ENCODE measurements at regions of chr1 and their contacts with region 1.

Region 1: DNA sequence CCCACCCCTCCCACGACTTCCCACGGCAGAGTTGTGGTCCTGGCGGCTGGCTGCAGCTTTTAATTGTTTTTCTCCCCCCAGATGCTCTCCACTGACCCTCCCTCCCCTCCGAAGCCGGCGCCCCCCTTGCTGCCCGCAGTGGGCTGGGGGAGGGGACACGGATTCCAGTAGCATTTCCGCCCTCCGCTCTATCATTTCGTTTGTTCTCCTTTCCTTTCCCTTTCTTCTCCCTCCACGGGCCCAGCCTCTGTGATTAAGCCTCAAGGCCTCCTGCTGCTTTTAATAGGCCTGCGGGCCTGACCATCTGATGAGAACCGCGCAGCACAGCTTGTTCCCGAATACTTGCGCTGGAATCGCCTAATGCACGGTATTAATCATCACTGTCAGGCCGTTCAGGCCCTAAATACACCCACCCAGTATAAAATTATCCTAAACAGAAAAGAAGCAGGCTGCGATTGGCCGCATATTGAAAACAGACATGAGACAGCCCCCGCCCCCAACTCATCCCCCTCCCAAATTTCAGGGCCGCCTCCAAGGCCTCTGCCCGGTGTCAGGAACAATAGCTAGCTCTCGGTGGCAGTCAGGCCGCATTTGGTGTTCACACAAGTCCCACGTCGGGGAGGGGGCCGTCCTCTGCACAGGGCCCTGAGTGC is 102.0 kb upstream of the ARHGEF16 start:
- DNase-seq: peak in 2 of 5 donors; percentile 53 to 84
- ATAC-seq: peak in 2 of 4 donors; percentile 2 to 18
- H3K4me3 ChIP-seq: no peak overlapping the region
- H3K27ac ChIP-seq: peak overlapping the region; percentile 60 to 98 (median 90)
- H3K4me1 ChIP-seq: peaks cover 0 to 87% (median 52%) of the 10 kb centered on the region in 12 donors
- H3K27me3 ChIP-seq: peaks cover 0 to 20% (median 0%) of the 10 kb centered on the region in 9 donors
- CTCF ChIP-seq: no peak
- POLR2A ChIP-seq: peak in 1 of 2 donors; percentile 18

Region 2: DNA sequence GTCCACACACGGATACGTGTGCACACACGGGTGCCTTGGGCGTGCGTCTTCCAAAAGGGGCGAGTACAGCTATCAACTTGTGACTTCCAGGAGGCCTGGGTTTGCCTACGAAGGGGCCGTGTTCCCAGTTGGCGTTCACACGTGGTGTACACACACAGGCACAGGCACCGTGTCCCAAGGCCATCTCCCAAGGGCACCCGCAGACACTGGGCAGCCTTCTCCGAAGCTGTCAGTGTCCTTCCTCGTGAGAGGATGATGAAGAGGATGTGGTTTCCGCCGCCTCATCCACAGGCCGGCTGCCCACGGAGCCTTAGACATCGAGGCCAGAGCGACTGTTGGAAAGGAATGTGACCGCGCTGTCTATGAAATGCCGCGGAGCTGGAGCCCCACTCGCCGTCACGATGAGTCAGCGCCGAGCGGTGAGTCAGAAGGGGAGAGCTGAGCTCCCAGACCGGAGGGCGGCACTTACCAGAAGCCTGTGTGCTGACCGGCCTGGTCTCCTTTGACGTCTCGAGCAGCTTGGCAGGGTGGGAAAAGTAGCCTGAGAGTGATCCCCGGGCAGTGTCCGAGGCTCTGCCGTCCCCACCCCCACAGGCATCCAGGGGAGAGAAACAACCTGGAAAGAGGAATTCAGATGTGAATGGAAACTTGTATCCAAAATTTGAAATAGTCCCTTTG is 39.4 kb before region 1 on chr1:
- intact Hi-C with region 1: loop called in 3 of 10 experiments (anchors 5 kb)
- DNase-seq: peak; percentile 88 to 98 (median 93)
- ATAC-seq: peak; percentile 91 to 96 (median 94)
- H3K4me3 ChIP-seq: peak overlapping the region in 5 of 12 donors; percentile 7 to 22 (median 17)
- H3K27ac ChIP-seq: peak overlapping the region; percentile 77 to 99 (median 94)
- H3K4me1 ChIP-seq: peaks cover 0 to 78% (median 36%) of the 10 kb centered on the region in 12 donors
- H3K27me3 ChIP-seq: no peaks in the 10 kb centered on the region
- CTCF ChIP-seq: no peak
- POLR2A ChIP-seq: peak in 1 of 2 donors; percentile 41

Region 3: DNA sequence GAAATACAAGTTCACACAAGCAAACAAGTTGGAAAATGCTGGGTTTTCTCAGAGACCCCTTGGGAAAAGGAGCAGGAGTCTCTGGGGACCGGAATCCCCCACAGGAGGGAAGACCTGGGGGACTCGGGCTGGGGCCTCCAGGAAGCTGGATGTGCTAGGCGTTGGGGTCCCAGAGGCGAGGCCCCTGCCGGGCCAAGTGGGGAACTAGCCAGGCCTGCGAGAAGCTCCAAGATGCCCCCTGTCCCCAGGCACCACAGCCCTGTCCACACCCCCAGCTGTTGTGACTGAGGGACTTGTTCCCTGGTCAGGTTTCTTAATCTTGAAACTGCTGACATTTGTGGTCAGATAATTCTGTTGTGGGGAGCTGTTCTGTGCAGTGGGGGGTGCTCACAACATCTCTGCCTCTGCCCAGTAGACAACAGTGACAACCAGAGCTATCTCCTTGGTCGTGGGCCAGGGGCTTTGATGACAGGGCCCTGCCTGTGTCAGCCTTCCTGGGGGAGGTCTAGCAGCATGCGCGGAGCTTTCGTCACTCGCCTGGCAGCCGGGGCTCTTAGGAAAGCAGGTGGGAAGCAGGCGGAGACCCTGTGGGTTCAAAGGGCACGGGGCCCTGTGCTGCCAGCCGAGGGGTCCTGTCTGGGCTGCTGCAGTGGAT is 24.4 kb before region 1 on chr1:
- intact Hi-C with region 1: loop called in 2 of 10 experiments (anchors 1 to 2 kb)
- DNase-seq: peak; percentile 69 to 95 (median 79)
- ATAC-seq: peak; percentile 85 to 87 (median 86)
- H3K4me3 ChIP-seq: no peak overlapping the region
- H3K27ac ChIP-seq: peak overlapping the region in 10 of 12 donors; percentile 2 to 86 (median 55)
- H3K4me1 ChIP-seq: peaks cover 4 to 61% (median 22%) of the 10 kb centered on the region in 12 donors
- H3K27me3 ChIP-seq: peaks cover 0 to 6% (median 0%) of the 10 kb centered on the region in 9 donors
- CTCF ChIP-seq: no peak
- POLR2A ChIP-seq: no peak

Region 4: DNA sequence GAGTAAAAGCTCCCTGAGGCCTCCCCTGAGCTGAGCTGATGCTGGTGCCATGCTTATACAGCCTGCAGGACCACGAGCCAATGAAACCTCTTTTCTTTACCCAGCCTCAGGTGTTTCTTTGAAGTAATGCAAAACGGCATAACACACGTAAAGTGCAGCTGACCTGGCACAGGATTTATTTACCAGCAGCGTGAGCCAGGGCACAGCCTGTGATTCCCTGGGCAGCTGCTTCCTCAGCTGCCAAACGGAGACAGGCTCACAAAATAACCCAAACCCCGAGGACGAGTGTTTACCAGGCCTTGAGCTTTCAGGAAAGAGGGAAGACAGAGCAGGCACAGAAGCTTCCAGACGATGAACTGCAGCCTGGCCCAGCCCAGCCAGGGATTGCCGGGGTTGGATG is 18.5 kb before region 1 on chr1:
- intact Hi-C with region 1: loop called in 2 of 10 experiments (anchors 1 to 2 kb)
- DNase-seq: no peak
- ATAC-seq: peak; percentile 3 to 74 (median 44)
- H3K4me3 ChIP-seq: no peak overlapping the region
- H3K27ac ChIP-seq: peak overlapping the region in 11 of 12 donors; percentile 28 to 80 (median 62)
- H3K4me1 ChIP-seq: peaks cover 0 to 76% (median 20%) of the 10 kb centered on the region in 12 donors
- H3K27me3 ChIP-seq: peaks cover 0 to 7% (median 0%) of the 10 kb centered on the region in 9 donors
- CTCF ChIP-seq: no peak
- POLR2A ChIP-seq: no peak

Region 5: GRCh38 chr1:3393024-3393986 is 40.9 kb after region 1 on chr1:
- intact Hi-C with region 1: loop called in 5 of 10 experiments (anchors 1 to 5 kb)
- DNase-seq: peak; percentile 72 to 89 (median 76)
- ATAC-seq: peak; percentile 81 to 91 (median 84)
- H3K4me3 ChIP-seq: peak overlapping the region; percentile 23 to 62 (median 50)
- H3K27ac ChIP-seq: peak overlapping the region; percentile 44 to 90 (median 76)
- H3K4me1 ChIP-seq: peaks cover 0 to 32% (median 13%) of the 10 kb centered on the region in 12 donors
- H3K27me3 ChIP-seq: peaks cover 0 to 34% (median 4%) of the 10 kb centered on the region in 9 donors
- CTCF ChIP-seq: peak in 3 of 12 donors; percentile 13 to 24 (median 20)
- POLR2A ChIP-seq: peak in 1 of 2 donors; percentile 39

Measured in heart left ventricle (tissue), 16 donors.